ENCODE measurements at regions of chr11 and their contacts with region 1.

Region 1: DNA sequence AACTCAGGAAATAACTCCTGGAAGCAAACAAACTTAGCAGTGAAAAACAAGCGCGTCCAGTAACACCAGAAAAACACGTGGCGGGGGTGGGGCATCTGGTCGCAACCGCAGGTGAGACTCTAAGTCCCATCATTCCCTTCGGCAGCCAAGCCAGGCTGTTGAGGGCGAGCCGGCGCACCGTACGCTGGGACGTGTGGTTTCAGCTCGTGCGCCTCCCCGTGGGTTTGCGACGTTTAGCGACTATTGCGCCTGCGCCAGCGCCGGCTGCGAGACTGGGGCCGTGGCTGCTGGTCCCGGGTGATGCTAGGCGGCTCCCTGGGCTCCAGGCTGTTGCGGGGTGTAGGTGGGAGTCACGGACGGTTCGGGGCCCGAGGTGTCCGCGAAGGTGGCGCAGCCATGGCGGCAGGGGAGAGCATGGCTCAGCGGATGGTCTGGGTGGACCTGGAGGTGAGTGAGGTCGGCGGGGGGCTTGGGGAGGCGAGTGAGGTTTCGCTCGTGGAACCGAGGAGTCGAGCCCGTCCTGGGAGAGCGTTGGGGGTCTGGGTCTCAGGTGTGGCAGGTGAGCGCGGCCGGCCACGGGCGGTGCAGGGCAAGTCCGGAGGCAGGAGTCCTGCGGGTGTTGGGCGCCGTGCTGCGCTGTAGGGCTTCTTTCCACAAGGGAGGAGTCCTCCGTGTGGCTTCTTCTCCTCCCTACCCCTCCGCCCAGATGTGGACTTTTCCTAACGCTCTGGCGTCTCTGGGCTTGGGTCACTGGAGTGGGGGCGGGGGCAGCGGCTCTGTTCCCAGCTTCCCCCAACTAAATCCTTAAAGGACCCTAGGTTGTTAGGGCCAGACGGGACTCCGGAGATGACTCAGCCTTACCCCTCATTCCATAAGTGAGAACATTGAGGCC is at the start of gene REXO2:
- DNase-seq: peak; percentile 92
- H3K4me3 Mint-ChIP-seq: peak within 1 kb of the TSS; percentile 91
- H3K27ac Mint-ChIP-seq: peak within 1 kb of the TSS; percentile 94
- H3K4me1 Mint-ChIP-seq: peaks cover 48% of the 10 kb centered on the region
- H3K27me3 Mint-ChIP-seq: no peaks in the 10 kb centered on the region
- total RNA-seq, gene REXO2: 109 and 111 TPM in 2 replicates

Region 2: DNA sequence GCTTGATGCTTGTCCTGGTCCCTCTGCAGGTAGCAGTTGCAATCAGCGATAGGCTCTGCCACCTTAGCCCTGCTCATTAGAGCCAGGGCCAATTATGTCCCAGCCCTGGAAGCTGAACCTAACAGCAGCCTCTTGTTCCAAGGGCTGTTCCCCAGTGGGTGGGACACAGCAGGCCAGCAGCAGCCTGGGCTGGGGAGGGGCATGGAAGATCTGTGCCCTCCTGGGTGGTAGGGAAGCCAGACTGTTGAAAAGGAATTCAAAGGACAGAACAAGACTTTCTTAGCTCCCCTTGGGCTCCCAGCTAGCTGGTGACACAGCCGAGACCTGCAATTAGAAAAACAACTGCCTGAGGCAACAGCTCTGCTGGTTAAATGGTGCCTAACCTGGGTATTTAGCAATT is 981.7 kb before region 1 on chr11:
- intact Hi-C with region 1: no loop called
- DNase-seq: no peak
- H3K4me3 Mint-ChIP-seq: no peak overlapping the region
- H3K27ac Mint-ChIP-seq: no peak overlapping the region
- H3K4me1 Mint-ChIP-seq: no peaks in the 10 kb centered on the region
- H3K27me3 Mint-ChIP-seq: peaks cover 10% of the 10 kb centered on the region

Region 3: DNA sequence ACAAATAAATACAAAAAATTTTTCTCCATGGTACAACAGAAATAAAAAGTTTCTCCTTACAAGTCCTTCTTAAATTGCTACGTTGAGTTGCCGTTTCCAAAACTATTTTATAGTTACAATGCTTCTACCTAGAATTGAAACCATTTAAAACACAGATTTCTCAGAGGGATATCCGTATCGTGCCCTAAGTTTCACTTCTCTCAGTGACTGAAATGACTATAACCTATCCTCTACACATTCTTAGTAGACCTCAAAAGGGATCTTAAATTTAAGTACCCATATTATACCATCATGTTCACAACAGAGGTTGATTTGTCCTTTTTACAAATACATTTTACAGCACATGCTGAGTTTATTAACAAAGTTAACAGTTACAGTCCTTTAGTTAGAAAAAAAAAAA is 608.2 kb before region 1 on chr11:
- intact Hi-C with region 1: no loop called
- DNase-seq: no peak
- H3K4me3 Mint-ChIP-seq: no peak overlapping the region
- H3K27ac Mint-ChIP-seq: no peak overlapping the region
- H3K4me1 Mint-ChIP-seq: no peaks in the 10 kb centered on the region
- H3K27me3 Mint-ChIP-seq: no peaks in the 10 kb centered on the region

Region 4: GRCh38 chr11:114228435-114229411 is 210.8 kb before region 1 on chr11:
- intact Hi-C with region 1: no loop called
- DNase-seq: no peak
- H3K4me3 Mint-ChIP-seq: no peak overlapping the region
- H3K27ac Mint-ChIP-seq: no peak overlapping the region
- H3K4me1 Mint-ChIP-seq: peaks cover 7% of the 10 kb centered on the region
- H3K27me3 Mint-ChIP-seq: peaks cover 13% of the 10 kb centered on the region

Region 5: GRCh38 chr11:114348200-114349191 is 91.0 kb before region 1 on chr11:
- intact Hi-C with region 1: loop called (anchors 1 kb)
- DNase-seq: no peak
- H3K4me3 Mint-ChIP-seq: no peak overlapping the region
- H3K27ac Mint-ChIP-seq: no peak overlapping the region
- H3K4me1 Mint-ChIP-seq: no peaks in the 10 kb centered on the region
- H3K27me3 Mint-ChIP-seq: no peaks in the 10 kb centered on the region

Region 6: GRCh38 chr11:114400217-114400914 is 39.1 kb before region 1 on chr11 and contains the starts of genes C11orf71 and RBM7:
- intact Hi-C with region 1: loop called (anchors 1 kb)
- DNase-seq: peak; percentile 97
- H3K4me3 Mint-ChIP-seq: peak within 1 kb of the TSS; percentile 92
- H3K27ac Mint-ChIP-seq: peak within 1 kb of the TSS; percentile 98
- H3K4me1 Mint-ChIP-seq: peaks cover 51% of the 10 kb centered on the region
- H3K27me3 Mint-ChIP-seq: no peaks in the 10 kb centered on the region
- total RNA-seq, gene C11orf71: 7.7 and 9.3 TPM in 2 replicates
- total RNA-seq, gene RBM7: 34.4 and 38.8 TPM in 2 replicates

Region 7: GRCh38 chr11:114606003-114606801 is 166.7 kb after region 1 on chr11:
- intact Hi-C with region 1: loop called (anchors 2 kb)
- DNase-seq: no peak
- H3K4me3 Mint-ChIP-seq: no peak overlapping the region
- H3K27ac Mint-ChIP-seq: no peak overlapping the region
- H3K4me1 Mint-ChIP-seq: no peaks in the 10 kb centered on the region
- H3K27me3 Mint-ChIP-seq: no peaks in the 10 kb centered on the region

Region 8: DNA sequence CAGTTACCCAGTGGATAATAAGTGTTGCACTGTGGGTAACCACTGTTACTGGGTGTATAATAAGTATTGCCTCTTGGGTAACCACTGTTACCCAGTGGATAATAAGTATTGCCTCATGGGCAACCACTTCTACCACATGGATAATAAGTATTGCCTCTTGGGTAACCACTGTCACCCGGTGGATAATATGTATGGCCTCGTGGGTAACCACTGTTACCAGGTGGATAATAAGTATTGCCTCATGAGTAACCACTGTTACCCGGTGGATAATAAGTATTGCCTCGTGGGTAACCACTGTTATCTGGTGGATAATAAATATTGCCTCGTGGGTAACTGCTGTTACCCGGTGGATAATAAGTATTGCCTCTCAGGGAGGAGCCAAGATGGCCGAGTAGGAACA is 185.8 kb after region 1 on chr11:
- intact Hi-C with region 1: loop called (anchors 10 kb)
- DNase-seq: no peak
- H3K4me3 Mint-ChIP-seq: no peak overlapping the region
- H3K27ac Mint-ChIP-seq: no peak overlapping the region
- H3K4me1 Mint-ChIP-seq: no peaks in the 10 kb centered on the region
- H3K27me3 Mint-ChIP-seq: no peaks in the 10 kb centered on the region